ENCODE measurements at regions of chr19 and their contacts with region 1.

Region 1: DNA sequence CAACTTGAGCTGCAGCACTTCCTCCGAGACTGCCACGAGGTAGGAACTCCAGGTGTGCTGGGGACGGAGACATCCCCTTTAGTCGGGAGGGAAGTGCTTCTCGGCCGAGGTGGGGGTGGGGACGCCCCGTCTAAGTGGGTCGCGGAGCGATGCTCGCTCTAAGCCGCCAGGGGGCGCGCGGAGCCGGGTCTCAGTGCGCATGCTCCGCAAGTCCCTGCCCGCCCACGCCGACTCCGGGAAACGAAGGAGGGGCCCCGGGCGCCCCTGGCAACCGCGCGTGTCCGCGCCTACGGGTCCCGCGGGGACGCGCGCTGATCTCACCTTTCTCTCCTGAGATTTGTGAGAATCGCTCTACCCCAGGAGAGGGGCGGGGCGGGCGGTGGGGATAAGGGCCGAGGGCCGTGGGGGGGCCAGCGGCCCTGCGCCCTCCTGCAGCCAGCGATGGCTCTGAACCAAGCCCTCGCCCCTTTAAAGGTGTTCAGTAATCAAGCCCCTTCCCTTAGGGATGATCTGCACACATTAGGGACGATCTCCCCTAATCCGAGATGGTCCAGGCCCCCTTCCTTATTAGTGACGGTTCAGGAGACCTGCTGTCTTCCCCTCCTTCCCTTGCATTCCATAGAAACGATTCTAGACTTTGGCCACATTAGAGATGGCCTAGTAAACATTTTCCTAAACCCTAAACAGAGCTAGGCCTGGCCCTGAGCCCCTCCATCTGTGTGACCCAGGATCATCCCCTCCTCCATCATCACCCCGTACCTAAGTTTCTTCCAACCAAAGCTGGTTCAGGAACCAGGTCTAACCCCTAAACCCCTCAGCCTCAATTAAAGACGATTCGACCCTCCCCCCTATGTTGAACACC is 47.3 kb upstream of the SHKBP1 start:
- DNase-seq: peak; percentile 61 to 91
- H3K4me3 ChIP-seq: peak overlapping the region; percentile 58 to 62
- H3K27ac ChIP-seq: no peak overlapping the region
- H3K4me1 ChIP-seq: peaks cover 2 to 5% of the 10 kb centered on the region in 2 donors
- H3K27me3 ChIP-seq: no peaks in the 10 kb centered on the region
- CTCF ChIP-seq: peak; percentile 96 to 99 (median 98)

Region 2: GRCh38 chr19:40403262-40403984 is 125.9 kb before region 1 on chr19:
- intact Hi-C with region 1: loop called (anchors 5 kb)
- DNase-seq: peak; percentile 63 to 95
- H3K4me3 ChIP-seq: peak overlapping the region; percentile 50 to 67
- H3K27ac ChIP-seq: peak overlapping the region; percentile 67 to 79
- H3K4me1 ChIP-seq: peaks cover 3 to 4% of the 10 kb centered on the region in 2 donors
- H3K27me3 ChIP-seq: no peaks in the 10 kb centered on the region
- CTCF ChIP-seq: peak in 1 of 3 experiments; percentile 13

Region 3: GRCh38 chr19:40576585-40577451 is 47.5 kb after region 1 on chr19 and contains the start of gene SHKBP1:
- intact Hi-C with region 1: loop called (anchors 2 kb)
- DNase-seq: peak; percentile 80 to 96
- H3K4me3 ChIP-seq: peak within 1 kb of the TSS; percentile 75 to 84
- H3K27ac ChIP-seq: peak within 1 kb of the TSS; percentile 66
- H3K4me1 ChIP-seq: peaks cover 0 to 11% of the 10 kb centered on the region in 2 donors
- H3K27me3 ChIP-seq: no peaks in the 10 kb centered on the region
- CTCF ChIP-seq: no peak
- total RNA-seq, gene SHKBP1: 192 TPM

Region 4: GRCh38 chr19:40633207-40633606 is 103.9 kb after region 1 on chr19:
- intact Hi-C with region 1: loop called (anchors 1 kb)
- DNase-seq: no peak
- H3K4me3 ChIP-seq: no peak overlapping the region
- H3K27ac ChIP-seq: peak overlapping the region; percentile 60 to 63
- H3K4me1 ChIP-seq: peaks cover 2 to 6% of the 10 kb centered on the region in 2 donors
- H3K27me3 ChIP-seq: no peaks in the 10 kb centered on the region
- CTCF ChIP-seq: no peak

Measured in ascending aorta (tissue), 2 donors.